Activated T-helper 1 cell treated with anti-CD3 and anti-CD28 coated beads, Interleukin-12 subunit alpha, Interleukin-12 subunit beta, Interleukin-2, Interleukin-4 antibody, amounts not matched to agents 30 ng/mL and 10 ng/mL and 1 ng/mL, durations not matched to agents 14 hours and 24 hours and 36 hours (primary cell): ENCODE measurements at regions of chr5 and their contacts with region 1.

Region 1: GRCh38 chr5:154072414-154073171 is 33.8 kb downstream of the MFAP3 start:
- DNase-seq: peak; percentile 77
- H3K4me3 Mint-ChIP-seq: peak overlapping the region; percentile 28
- H3K27ac Mint-ChIP-seq: peak overlapping the region; percentile 16
- H3K4me1 Mint-ChIP-seq: peaks cover 56% of the 10 kb centered on the region
- H3K27me3 Mint-ChIP-seq: no peaks in the 10 kb centered on the region

Region 2: GRCh38 chr5:154038707-154039457 is 33.7 kb before region 1 on chr5 and contains the starts of genes FAM114A2 and MFAP3:
- intact Hi-C with region 1: loop called (anchors 1 kb)
- DNase-seq: peak; percentile 88
- H3K4me3 Mint-ChIP-seq: peak within 1 kb of the TSS; percentile 98
- H3K27ac Mint-ChIP-seq: peak within 1 kb of the TSS; percentile 94
- H3K4me1 Mint-ChIP-seq: peaks cover 50% of the 10 kb centered on the region
- H3K27me3 Mint-ChIP-seq: no peaks in the 10 kb centered on the region
- total RNA-seq, gene FAM114A2: 28.3 and 28.7 TPM in 2 replicates
- total RNA-seq, gene MFAP3: 24.3 and 29.9 TPM in 2 replicates

Region 3: DNA sequence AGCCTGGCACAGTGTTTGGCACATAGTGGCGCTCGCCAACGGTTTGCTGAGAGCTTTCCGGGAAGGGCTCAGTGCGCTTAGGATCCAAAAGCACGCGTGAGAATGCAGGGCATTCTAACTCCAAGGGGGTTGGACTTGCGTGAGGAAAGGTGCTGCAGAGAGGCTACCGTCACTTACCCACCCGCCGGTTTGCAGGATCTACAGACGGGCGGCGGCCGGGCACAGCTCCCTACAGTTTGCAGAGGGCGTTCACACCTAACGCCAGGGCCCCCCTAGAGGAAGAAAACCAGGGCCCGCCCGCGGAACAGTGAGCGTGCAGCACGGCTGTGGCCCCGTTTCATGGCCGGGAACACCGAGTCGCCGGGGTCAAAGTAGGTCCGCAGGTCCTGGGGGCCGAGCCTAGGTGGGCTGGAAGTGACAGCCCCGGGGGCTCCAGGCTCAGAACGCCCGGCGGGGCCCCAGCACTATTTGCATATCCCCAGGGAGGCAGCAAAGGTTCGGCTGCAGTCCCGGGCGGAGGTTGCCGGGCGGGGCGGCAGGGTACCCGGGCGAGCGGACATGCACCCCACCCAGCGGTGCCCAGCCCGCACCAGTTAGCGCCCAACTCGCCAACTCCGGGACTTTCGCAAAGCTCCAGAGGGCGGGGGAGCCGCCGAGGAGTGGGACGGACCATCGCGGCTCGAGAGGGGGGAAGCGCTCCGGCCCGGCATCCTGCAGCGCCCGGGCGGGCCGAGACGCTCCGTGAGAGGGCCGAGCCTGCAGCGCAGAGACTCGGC is 117.4 kb after region 1 on chr5:
- intact Hi-C with region 1: loop called (anchors 1 kb)
- DNase-seq: peak; percentile 77
- H3K4me3 Mint-ChIP-seq: peak overlapping the region; percentile 87
- H3K27ac Mint-ChIP-seq: peak overlapping the region; percentile 85
- H3K4me1 Mint-ChIP-seq: peaks cover 54% of the 10 kb centered on the region
- H3K27me3 Mint-ChIP-seq: peaks cover 3% of the 10 kb centered on the region

Region 4: GRCh38 chr5:154320224-154321089 is 247.9 kb after region 1 on chr5:
- intact Hi-C with region 1: loop called (anchors 5 kb)
- DNase-seq: no peak
- H3K4me3 Mint-ChIP-seq: no peak overlapping the region
- H3K27ac Mint-ChIP-seq: peak overlapping the region; percentile 3
- H3K4me1 Mint-ChIP-seq: peaks cover 19% of the 10 kb centered on the region
- H3K27me3 Mint-ChIP-seq: no peaks in the 10 kb centered on the region

Region 5: GRCh38 chr5:154445422-154446182 is 373.0 kb after region 1 on chr5 and contains the start of gene SAP30L:
- intact Hi-C with region 1: loop called (anchors 1 kb)
- DNase-seq: peak; percentile 96
- H3K4me3 Mint-ChIP-seq: peak within 1 kb of the TSS; percentile 99
- H3K27ac Mint-ChIP-seq: peak within 1 kb of the TSS; percentile 95
- H3K4me1 Mint-ChIP-seq: peaks cover 65% of the 10 kb centered on the region
- H3K27me3 Mint-ChIP-seq: no peaks in the 10 kb centered on the region
- total RNA-seq, gene SAP30L: 37.5 and 44.4 TPM in 2 replicates

Region 6: DNA sequence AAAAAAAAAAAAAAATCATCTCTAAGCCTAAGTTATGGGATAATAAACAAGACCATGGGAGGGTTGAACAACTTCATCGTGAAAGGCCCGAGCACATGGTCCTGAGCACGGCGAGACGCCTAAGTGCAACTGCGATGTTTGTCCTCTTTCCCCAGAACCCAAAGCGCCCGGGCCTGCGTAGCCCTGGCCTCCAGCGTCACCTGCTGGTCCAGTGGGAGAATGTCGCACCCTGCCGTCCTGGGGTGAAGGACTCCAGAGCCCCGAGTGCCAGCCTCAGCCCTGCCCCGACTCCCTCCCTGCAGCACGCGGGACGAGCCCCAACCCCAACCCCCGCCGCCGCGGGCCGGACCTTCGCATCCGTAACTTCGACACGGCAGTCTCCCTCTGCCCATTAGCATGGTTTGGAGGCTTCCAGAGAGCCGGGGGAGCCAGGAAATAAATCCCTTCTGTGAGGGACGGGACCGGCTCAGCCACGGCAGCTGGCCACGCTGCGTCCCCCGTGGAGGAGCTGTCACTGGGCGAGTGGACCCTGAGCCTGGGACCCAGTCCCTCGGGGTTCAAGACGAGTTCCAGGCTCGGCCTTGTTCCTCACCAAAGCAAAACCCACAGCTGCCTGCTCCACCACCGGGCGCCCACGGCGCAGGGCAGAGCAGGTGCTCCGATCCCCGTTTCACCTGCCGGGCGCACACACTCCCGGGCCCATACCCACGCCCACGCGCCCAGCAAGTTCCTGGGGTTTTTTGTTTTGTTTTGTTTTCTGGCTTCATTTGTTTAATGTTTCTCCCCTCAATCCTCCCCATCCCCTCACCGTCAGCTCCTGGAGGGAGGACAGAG is 537.9 kb after region 1 on chr5:
- intact Hi-C with region 1: loop called (anchors 5 kb)
- DNase-seq: peak; percentile 47
- H3K4me3 Mint-ChIP-seq: no peak overlapping the region
- H3K27ac Mint-ChIP-seq: no peak overlapping the region
- H3K4me1 Mint-ChIP-seq: no peaks in the 10 kb centered on the region
- H3K27me3 Mint-ChIP-seq: peaks cover 44% of the 10 kb centered on the region